AG04450 (cell line): ENCODE measurements at regions of chr12 and their contacts with region 1.

Region 1: GRCh38 chr12:20376984-20377383 is 8.6 kb downstream of the PDE3A start:
- DNase-seq: no peak
- H3K4me3 ChIP-seq: no peak overlapping the region
- H3K27ac ChIP-seq: no peak overlapping the region
- H3K27me3 ChIP-seq: peaks cover 2% of the 10 kb centered on the region
- CTCF ChIP-seq: peak; percentile 34

Region 2: DNA sequence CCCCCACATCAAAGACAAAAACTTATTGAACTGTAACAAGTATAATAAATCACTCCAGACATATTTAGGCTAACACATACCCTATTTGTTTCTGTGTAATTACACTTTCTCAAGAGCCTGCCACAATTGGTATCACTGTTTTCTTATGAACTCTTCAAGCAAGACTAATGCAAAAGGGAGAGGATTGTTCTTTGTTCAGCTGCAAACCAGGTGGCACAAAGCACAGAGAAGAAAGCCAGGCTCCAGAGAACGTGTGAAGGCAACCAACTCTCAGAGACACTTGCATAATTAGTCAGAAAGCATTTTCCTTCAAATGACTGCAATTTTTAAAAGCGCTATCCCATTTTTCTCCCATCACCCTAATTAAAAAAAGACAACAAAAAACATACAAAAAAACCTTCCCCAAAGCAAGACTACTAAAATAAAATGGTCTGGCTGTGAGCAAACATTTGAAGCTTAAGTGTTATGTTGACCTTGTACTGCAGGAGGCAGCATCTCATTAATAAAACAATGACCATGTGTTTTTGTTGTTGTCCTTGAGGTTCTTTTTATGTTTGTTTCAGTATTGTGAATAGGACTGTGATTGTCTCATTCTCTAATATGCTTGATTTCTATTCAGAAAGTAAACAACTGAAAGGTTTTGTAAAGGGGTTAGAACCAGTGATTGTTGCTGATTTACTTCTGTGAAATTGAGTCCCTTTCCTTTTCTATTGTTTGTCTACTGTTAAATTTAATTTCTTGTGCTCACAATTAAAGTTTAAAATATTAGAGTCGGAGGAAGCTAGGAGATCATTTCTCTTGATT is 461.4 kb before region 1 on chr12:
- CTCF ChIA-PET with region 1: interaction called, 10 read pairs
- POLR2A ChIA-PET with region 1: no interaction called
- DNase-seq: no peak
- H3K4me3 ChIP-seq: no peak overlapping the region
- H3K27ac ChIP-seq: no peak overlapping the region
- H3K27me3 ChIP-seq: no peaks in the 10 kb centered on the region
- CTCF ChIP-seq: peak; percentile 55

Region 3: DNA sequence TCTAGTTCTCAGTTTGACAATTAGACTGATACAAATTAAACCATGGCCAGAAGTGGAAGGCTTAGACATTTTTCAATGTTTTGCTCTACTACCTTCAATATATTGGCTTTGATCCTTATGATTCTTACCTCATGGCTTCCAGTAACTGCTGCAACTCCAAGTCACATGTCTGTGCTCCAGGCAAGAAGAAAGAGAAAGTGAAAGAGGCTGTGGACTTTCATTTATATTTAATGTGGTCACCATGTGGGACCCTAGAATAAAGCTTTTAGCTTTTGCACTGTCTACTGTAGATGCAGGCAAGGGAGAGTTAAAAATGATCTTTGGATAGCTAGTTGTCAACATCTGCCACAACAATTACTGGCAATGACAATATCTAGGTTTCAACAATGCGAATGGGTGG is 222.9 kb before region 1 on chr12:
- CTCF ChIA-PET with region 1: no interaction called
- POLR2A ChIA-PET with region 1: no interaction called
- DNase-seq: no peak
- H3K4me3 ChIP-seq: no peak overlapping the region
- H3K27ac ChIP-seq: no peak overlapping the region
- H3K27me3 ChIP-seq: no peaks in the 10 kb centered on the region
- CTCF ChIP-seq: no peak